Dendritic cell treated with granulocyte-macrophage colony-stimulating factor and Interleukin-4, amounts not matched to agents 40 ng/mL and 50 ng/mL, for 4 days (primary cell): ENCODE measurements at regions of chr10 and their contacts with region 1.

Region 1: GRCh38 chr10:74234569-74234968 is 83.5 kb downstream of the ADK start:
- H3K4me3 Mint-ChIP-seq: no peak overlapping the region
- H3K27ac Mint-ChIP-seq: no peak overlapping the region
- H3K4me1 Mint-ChIP-seq: peaks cover 23% of the 10 kb centered on the region
- H3K27me3 Mint-ChIP-seq: no peaks in the 10 kb centered on the region

Region 2: DNA sequence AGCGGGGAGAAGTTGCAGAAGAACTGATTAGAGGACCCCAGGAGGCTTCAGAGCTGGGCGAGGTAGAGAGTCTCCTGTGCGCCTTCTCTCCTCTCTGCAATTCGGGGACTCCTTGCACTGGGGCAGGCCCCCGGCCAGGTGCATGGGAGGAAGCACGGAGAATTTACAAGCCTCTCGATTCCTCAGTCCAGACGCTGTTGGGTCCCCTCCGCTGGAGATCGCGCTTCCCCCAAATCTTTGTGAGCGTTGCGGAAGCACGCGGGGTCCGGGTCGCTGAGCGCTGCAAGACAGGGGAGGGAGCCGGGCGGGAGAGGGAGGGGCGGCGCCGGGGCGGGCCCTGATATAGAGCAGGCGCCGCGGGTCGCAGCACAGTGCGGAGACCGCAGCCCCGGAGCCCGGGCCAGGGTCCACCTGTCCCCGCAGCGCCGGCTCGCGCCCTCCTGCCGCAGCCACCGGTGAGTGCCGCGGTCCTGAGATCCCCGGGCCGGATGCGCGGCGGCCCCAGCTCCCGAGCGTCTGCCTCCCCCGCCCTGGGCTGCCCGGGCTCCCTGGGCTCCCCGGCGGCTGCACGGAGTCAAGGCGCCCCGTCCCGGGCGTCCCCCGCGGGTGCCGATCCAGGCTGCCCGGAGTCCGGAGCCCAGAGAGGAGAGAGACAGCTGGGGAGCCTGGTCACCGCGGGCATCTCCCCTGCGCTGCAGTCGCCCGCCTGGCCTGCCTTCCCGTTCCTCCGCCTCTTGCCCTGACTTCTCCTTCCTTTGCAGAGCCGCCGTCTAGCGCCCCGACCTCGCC is 323.6 kb before region 1 on chr10 and contains the start of gene PLAU:
- intact Hi-C with region 1: no loop called
- H3K4me3 Mint-ChIP-seq: peak within 1 kb of the TSS; percentile 93
- H3K27ac Mint-ChIP-seq: peak within 1 kb of the TSS; percentile 93
- H3K4me1 Mint-ChIP-seq: peaks cover 79% of the 10 kb centered on the region
- H3K27me3 Mint-ChIP-seq: no peaks in the 10 kb centered on the region

Region 3: DNA sequence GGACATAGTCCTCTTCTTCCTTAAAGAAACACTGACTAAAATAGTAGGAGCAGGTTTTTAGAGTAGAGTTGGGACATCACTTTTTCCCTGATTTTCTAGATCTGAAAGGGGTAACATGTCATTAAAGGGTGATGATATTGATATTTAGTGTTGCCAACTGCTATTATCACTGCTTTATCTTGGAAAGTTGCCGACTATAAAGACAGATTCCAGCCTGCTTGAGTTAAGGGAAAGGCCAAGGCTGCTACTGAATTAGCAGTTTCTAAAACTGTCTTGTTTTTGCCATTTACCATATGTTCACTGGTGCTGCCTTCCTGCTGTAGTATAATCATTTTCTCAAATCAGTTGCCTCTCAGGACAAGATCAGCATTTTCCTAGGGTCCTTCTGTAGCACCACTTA is 113.7 kb before region 1 on chr10:
- intact Hi-C with region 1: loop called (anchors 5 kb)
- H3K4me3 Mint-ChIP-seq: no peak overlapping the region
- H3K27ac Mint-ChIP-seq: no peak overlapping the region
- H3K4me1 Mint-ChIP-seq: peaks cover 31% of the 10 kb centered on the region
- H3K27me3 Mint-ChIP-seq: no peaks in the 10 kb centered on the region